MCF 10A (cell line): ENCODE measurements at regions of chr22 and their contacts with region 1.

Region 1: GRCh38 chr22:45096256-45096907 is 67.3 kb upstream of the NUP50 start:
- DNase-seq: peak; percentile 74
- H3K4me3 Mint-ChIP-seq: no peak overlapping the region
- H3K27ac Mint-ChIP-seq: no peak overlapping the region
- H3K4me1 Mint-ChIP-seq: peaks cover 11% of the 10 kb centered on the region
- H3K27me3 Mint-ChIP-seq: peaks cover 38% of the 10 kb centered on the region
- CTCF ChIP-seq: peak; percentile 80

Region 2: GRCh38 chr22:44918166-44918924 is 178.0 kb before region 1 on chr22:
- CTCF ChIA-PET with region 1: no interaction called
- POLR2A ChIA-PET with region 1: no interaction called
- intact Hi-C with region 1: no loop called
- DNase-seq: no peak
- H3K4me3 Mint-ChIP-seq: no peak overlapping the region
- H3K27ac Mint-ChIP-seq: no peak overlapping the region
- H3K4me1 Mint-ChIP-seq: no peaks in the 10 kb centered on the region
- H3K27me3 Mint-ChIP-seq: no peaks in the 10 kb centered on the region
- CTCF ChIP-seq: no peak

Region 3: DNA sequence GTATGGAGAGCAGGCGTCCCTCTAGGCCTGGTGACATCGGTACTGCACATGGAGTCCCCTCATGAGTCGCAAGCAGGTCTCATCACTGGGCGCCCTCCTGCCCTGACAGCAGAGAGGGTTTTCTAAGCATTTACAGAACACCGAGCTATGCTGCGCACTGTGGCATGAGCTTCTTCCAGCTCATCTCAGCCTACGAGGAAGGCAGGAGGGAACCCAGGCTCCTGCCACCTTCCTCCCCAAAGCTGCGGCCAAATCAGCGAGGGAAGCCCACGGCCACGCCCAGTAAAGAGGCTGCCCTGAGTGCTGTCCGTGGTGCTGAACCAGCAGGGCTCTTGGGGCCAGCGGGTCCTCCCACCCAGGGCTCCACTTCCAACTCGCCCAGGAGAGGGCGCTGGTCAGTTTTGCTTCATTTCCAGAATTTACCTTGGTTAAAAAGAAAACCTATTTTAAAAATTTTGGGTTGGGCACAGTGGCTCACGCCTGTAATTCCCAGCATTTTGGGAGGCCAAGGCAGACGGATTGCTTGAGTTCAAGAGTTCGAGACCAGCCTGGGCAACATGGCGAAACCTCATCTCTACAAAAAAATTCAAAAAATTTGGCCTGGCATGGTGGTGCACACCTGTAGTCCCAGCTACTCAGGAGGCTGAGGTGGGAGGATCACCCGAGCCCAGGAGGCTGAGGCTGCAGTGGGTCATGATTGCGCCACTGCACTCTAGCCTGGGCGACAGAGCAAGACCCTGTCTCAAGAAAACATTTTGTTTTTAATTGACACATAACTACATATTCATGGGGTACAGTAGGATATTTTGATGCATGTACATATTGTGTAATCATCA is 120.7 kb before region 1 on chr22:
- CTCF ChIA-PET with region 1: interaction called, 6 read pairs
- POLR2A ChIA-PET with region 1: no interaction called
- intact Hi-C with region 1: loop called (anchors 1 kb)
- DNase-seq: peak; percentile 91
- H3K4me3 Mint-ChIP-seq: no peak overlapping the region
- H3K27ac Mint-ChIP-seq: no peak overlapping the region
- H3K4me1 Mint-ChIP-seq: no peaks in the 10 kb centered on the region
- H3K27me3 Mint-ChIP-seq: peaks cover 51% of the 10 kb centered on the region
- CTCF ChIP-seq: peak; percentile 89

Region 4: DNA sequence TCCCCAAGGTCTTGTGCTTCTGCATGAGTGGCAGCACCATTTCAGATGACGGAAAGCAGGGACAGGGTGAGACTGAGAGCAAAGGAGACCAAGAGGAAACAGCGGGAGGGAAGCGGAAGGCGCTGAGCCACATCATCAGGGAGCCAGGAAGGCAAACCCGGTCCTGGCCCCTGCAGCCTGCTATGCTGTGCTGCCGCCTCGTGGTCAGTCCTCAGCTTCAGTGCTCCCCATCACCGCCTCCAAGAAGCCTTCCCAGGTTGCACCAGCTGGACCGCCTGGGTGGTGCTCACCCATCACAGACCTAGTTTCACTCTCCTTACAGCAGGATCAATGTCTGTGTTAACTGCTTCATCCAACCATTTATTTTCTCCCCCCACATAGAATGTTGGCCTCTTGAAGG is 13.6 kb before region 1 on chr22:
- CTCF ChIA-PET with region 1: interaction called, 37 read pairs
- POLR2A ChIA-PET with region 1: interaction called, 4 read pairs
- intact Hi-C with region 1: no loop called
- DNase-seq: peak; percentile 16
- H3K4me3 Mint-ChIP-seq: no peak overlapping the region
- H3K27ac Mint-ChIP-seq: no peak overlapping the region
- H3K4me1 Mint-ChIP-seq: no peaks in the 10 kb centered on the region
- H3K27me3 Mint-ChIP-seq: peaks cover 42% of the 10 kb centered on the region
- CTCF ChIP-seq: peak; percentile 40

Region 5: DNA sequence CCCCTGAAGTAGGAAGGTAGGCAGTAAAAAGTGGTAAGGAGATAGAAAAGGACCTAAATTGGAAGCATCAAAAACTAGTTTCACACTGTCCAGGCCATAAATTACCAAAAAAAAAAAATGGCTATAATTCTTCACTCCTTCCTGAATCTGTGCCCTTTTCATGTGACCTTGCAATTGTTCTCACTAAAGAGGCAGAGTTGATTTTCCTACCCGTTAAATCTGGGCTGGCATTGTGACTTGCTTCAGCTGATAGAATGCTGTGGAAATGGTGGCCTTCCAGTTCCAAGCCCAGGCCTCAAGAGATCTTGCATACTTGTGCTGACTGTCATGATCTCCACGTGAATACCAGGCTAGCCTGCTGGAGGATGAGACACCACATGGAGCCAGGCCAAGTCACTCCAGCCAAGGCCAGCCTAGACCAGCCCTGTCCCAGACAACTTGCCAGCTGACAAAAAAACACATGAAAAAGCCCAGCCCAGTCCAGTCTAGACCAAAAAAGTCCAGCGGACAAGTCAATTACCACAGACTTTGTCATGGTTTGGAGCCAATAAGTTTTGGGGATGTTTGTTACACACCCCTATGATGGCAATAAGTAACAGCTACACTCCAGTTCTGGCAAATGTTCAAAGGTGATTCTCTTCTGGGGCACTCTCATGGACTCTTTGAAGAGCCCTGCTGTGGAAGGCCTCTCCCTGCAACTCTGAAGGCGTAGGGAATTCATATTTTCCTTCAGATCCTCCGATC is 15.9 kb after region 1 on chr22:
- CTCF ChIA-PET with region 1: interaction called, 10 read pairs
- POLR2A ChIA-PET with region 1: no interaction called
- intact Hi-C with region 1: no loop called
- DNase-seq: peak; percentile 69
- H3K4me3 Mint-ChIP-seq: no peak overlapping the region
- H3K27ac Mint-ChIP-seq: peak overlapping the region; percentile 82
- H3K4me1 Mint-ChIP-seq: peaks cover 5% of the 10 kb centered on the region
- H3K27me3 Mint-ChIP-seq: no peaks in the 10 kb centered on the region
- CTCF ChIP-seq: no peak

Region 6: GRCh38 chr22:46220921-46221320 is 1124.5 kb after region 1 on chr22:
- CTCF ChIA-PET with region 1: no interaction called
- POLR2A ChIA-PET with region 1: no interaction called
- intact Hi-C with region 1: no loop called
- DNase-seq: no peak
- H3K4me3 Mint-ChIP-seq: no peak overlapping the region
- H3K27ac Mint-ChIP-seq: no peak overlapping the region
- H3K4me1 Mint-ChIP-seq: no peaks in the 10 kb centered on the region
- H3K27me3 Mint-ChIP-seq: no peaks in the 10 kb centered on the region
- CTCF ChIP-seq: no peak